MCF 10A (cell line): ENCODE measurements at regions of chr2 and their contacts with region 1.

Region 1: DNA sequence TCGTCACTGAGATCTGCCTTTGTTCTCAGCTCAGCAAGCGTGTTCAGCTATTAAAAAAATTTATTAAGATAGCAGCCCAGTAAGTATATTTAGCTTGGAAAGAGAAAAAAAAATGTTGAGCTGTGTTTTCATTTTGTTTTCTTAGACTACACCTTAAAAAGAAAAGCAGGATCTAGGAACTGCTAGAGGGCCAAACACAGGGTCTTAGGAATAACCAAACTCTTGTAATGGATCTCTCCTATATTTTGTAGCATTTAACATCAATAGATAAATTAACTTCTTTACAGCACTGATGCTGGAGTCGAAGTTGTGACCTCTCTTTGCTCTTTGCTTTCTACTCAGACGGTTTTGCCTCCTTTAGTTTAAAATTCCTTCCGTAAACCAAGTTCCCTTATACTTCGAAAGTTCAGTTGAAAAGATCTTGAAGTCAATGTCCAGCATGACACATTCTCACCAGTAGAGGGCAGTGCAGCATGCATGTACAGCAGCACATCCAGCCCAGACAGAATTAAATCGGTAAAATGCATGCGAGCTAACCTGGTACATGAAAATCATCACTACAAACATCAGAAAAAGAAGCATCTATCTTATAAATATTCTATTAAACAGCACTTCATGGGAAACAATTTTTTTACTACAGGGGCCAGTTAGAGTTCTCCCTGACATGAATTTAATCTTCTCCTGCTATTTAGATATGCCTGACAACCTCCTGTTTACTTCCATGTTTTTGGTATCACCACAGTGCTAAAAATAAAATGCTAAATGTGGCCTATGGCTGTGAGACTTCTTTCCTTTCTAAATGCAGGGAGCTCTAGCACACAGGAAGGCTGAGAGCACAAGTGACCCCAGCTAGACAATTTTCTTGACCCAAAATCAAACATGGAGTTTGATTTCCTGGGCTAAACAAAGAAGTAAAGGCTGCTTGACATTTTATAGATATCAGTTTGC is 48.2 kb upstream of the MAP3K20 start:
- DNase-seq: peak; percentile 88
- H3K4me3 Mint-ChIP-seq: no peak overlapping the region
- H3K27ac Mint-ChIP-seq: peak overlapping the region; percentile 9
- H3K4me1 Mint-ChIP-seq: peaks cover 12% of the 10 kb centered on the region
- H3K27me3 Mint-ChIP-seq: no peaks in the 10 kb centered on the region
- CTCF ChIP-seq: peak; percentile 79

Region 2: GRCh38 chr2:172972005-172972619 is 55.3 kb before region 1 on chr2:
- CTCF ChIA-PET with region 1: interaction called, 47 read pairs
- POLR2A ChIA-PET with region 1: interaction called, 5 read pairs
- intact Hi-C with region 1: loop called (anchors 1 kb)
- DNase-seq: peak; percentile 79
- H3K4me3 Mint-ChIP-seq: no peak overlapping the region
- H3K27ac Mint-ChIP-seq: no peak overlapping the region
- H3K4me1 Mint-ChIP-seq: peaks cover 35% of the 10 kb centered on the region
- H3K27me3 Mint-ChIP-seq: peaks cover 13% of the 10 kb centered on the region
- CTCF ChIP-seq: peak; percentile 80

Region 3: GRCh38 chr2:173048897-173049661 is 21.6 kb after region 1 on chr2:
- CTCF ChIA-PET with region 1: interaction called, 8 read pairs
- POLR2A ChIA-PET with region 1: interaction called, 25 read pairs
- intact Hi-C with region 1: no loop called
- DNase-seq: peak; percentile 98
- H3K4me3 Mint-ChIP-seq: peak overlapping the region; percentile 62
- H3K27ac Mint-ChIP-seq: peak overlapping the region; percentile 98
- H3K4me1 Mint-ChIP-seq: peaks cover 32% of the 10 kb centered on the region
- H3K27me3 Mint-ChIP-seq: no peaks in the 10 kb centered on the region
- CTCF ChIP-seq: no peak

Region 4: GRCh38 chr2:173124441-173124840 is 97.0 kb after region 1 on chr2:
- CTCF ChIA-PET with region 1: interaction called, 25 read pairs
- POLR2A ChIA-PET with region 1: interaction called, 10 read pairs
- intact Hi-C with region 1: no loop called
- DNase-seq: peak; percentile 94
- H3K4me3 Mint-ChIP-seq: peak overlapping the region; percentile 43
- H3K27ac Mint-ChIP-seq: peak overlapping the region; percentile 89
- H3K4me1 Mint-ChIP-seq: peaks cover 58% of the 10 kb centered on the region
- H3K27me3 Mint-ChIP-seq: no peaks in the 10 kb centered on the region
- CTCF ChIP-seq: no peak

Region 5: GRCh38 chr2:173223871-173224270 is 196.4 kb after region 1 on chr2:
- CTCF ChIA-PET with region 1: interaction called, 237 read pairs
- POLR2A ChIA-PET with region 1: interaction called, 4 read pairs
- intact Hi-C with region 1: no loop called
- DNase-seq: no peak
- H3K4me3 Mint-ChIP-seq: no peak overlapping the region
- H3K27ac Mint-ChIP-seq: no peak overlapping the region
- H3K4me1 Mint-ChIP-seq: no peaks in the 10 kb centered on the region
- H3K27me3 Mint-ChIP-seq: no peaks in the 10 kb centered on the region
- CTCF ChIP-seq: no peak

Region 6: GRCh38 chr2:173448938-173449471 is 421.6 kb after region 1 on chr2:
- CTCF ChIA-PET with region 1: interaction called, 17 read pairs
- POLR2A ChIA-PET with region 1: no interaction called
- intact Hi-C with region 1: loop called (anchors 5 kb)
- DNase-seq: peak; percentile 92
- H3K4me3 Mint-ChIP-seq: peak overlapping the region; percentile 73
- H3K27ac Mint-ChIP-seq: peak overlapping the region; percentile 64
- H3K4me1 Mint-ChIP-seq: no peaks in the 10 kb centered on the region
- H3K27me3 Mint-ChIP-seq: peaks cover 41% of the 10 kb centered on the region
- CTCF ChIP-seq: peak; percentile 82

Region 7: DNA sequence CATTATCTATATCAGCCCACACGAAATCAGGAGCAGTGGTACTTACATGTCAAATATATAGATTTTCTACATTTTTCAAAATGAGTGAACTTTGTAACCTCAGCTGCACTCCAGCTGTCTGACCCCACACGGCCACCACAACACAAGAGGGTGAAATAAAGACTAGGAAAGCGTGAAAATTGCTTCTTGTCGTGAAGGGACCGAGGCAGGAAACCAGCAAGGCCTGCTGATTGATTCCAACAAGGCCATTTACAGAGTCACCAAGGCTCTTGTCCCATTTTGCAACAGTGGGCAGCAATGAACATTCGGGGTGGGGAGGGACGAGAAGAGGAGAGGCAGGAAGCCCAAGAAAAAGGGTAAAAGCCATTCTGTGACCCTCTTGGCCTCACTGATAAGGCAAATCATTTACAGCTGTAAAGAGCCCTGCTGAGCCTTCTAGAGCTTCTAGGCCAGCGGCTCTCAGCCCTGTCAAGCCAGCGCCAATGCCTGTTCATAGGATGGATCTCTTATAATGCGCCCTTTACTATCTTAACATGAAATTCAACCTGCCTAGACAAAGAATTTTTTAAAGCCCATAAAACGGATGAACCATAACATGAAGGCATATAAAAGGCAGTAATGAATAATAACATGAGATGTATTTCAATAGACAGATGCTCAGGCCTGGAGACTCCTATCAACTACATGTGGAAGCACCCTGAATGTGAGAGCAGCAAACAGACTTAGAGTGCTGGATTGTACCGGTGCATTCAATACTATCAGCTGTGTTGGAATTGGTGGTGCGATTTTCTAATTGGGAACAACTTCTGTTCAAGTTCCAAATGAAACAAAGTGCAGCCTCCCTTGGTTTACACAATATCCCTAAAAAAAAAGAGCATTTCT is 596.2 kb after region 1 on chr2:
- CTCF ChIA-PET with region 1: no interaction called
- POLR2A ChIA-PET with region 1: no interaction called
- intact Hi-C with region 1: no loop called
- DNase-seq: no peak
- H3K4me3 Mint-ChIP-seq: no peak overlapping the region
- H3K27ac Mint-ChIP-seq: no peak overlapping the region
- H3K4me1 Mint-ChIP-seq: no peaks in the 10 kb centered on the region
- H3K27me3 Mint-ChIP-seq: no peaks in the 10 kb centered on the region
- CTCF ChIP-seq: no peak